Mammary epithelial cell (primary cell): ENCODE measurements at regions of chr22 and their contacts with region 1.

Region 1: DNA sequence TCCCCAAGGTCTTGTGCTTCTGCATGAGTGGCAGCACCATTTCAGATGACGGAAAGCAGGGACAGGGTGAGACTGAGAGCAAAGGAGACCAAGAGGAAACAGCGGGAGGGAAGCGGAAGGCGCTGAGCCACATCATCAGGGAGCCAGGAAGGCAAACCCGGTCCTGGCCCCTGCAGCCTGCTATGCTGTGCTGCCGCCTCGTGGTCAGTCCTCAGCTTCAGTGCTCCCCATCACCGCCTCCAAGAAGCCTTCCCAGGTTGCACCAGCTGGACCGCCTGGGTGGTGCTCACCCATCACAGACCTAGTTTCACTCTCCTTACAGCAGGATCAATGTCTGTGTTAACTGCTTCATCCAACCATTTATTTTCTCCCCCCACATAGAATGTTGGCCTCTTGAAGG is 73.0 kb upstream of the PHF21B start:
- DNase-seq: no peak
- H3K4me3 ChIP-seq: no peak overlapping the region
- H3K27ac ChIP-seq: no peak overlapping the region
- H3K4me1 ChIP-seq: peaks cover 4% of the 10 kb centered on the region
- H3K27me3 ChIP-seq: peaks cover 3% of the 10 kb centered on the region
- CTCF ChIP-seq: peak; percentile 18 to 28

Region 2: DNA sequence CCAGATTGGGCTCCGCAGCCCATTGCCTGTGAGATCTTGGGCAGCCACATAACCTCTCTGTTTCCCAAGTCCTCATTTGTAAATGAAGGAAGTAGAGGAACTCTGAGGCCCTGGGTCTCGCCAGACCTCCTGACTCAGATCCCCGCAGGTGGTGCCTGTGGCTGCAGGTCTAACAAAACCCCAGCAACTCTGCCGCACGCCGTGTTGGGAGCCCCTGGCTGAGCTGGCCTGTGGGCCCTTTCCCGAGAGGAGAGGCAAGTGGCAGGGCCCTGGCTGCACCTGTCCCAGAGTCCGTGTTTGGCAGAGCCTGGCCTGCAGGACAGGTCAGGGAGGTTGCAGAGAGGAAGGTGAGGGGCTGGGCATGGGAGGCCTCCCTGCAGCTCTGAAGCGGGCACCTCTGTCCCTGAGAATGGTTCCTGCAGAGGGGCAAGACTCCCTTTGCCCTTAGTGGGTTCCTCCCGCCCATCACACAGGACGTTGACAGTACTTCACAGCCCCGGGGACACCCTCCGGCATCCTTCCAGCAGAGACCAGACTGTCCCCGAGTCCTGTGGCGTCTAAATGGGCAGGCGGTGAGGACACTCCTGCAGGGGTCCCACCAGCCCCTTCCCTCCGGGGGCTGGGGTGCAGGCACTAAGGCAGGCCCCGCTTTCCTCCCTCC is 262.7 kb before region 1 on chr22:
- CTCF ChIA-PET with region 1: interaction called, 5 read pairs
- dilution Hi-C with region 1: no loop called
- in situ Hi-C with region 1: loop called in 1 of 2 experiments (anchors 25 kb)
- intact Hi-C with region 1: loop called (anchors 2 kb)
- DNase-seq: no peak
- H3K4me3 ChIP-seq: no peak overlapping the region
- H3K27ac ChIP-seq: no peak overlapping the region
- H3K4me1 ChIP-seq: no peaks in the 10 kb centered on the region
- H3K27me3 ChIP-seq: no peaks in the 10 kb centered on the region
- CTCF ChIP-seq: no peak

Region 3: GRCh38 chr22:44870021-44870420 is 212.8 kb before region 1 on chr22:
- CTCF ChIA-PET with region 1: no interaction called
- dilution Hi-C with region 1: no loop called
- in situ Hi-C with region 1: no loop called
- intact Hi-C with region 1: no loop called
- DNase-seq: peak; percentile 72
- H3K4me3 ChIP-seq: no peak overlapping the region
- H3K27ac ChIP-seq: no peak overlapping the region
- H3K4me1 ChIP-seq: peaks cover 10% of the 10 kb centered on the region
- H3K27me3 ChIP-seq: no peaks in the 10 kb centered on the region
- CTCF ChIP-seq: no peak

Region 4: DNA sequence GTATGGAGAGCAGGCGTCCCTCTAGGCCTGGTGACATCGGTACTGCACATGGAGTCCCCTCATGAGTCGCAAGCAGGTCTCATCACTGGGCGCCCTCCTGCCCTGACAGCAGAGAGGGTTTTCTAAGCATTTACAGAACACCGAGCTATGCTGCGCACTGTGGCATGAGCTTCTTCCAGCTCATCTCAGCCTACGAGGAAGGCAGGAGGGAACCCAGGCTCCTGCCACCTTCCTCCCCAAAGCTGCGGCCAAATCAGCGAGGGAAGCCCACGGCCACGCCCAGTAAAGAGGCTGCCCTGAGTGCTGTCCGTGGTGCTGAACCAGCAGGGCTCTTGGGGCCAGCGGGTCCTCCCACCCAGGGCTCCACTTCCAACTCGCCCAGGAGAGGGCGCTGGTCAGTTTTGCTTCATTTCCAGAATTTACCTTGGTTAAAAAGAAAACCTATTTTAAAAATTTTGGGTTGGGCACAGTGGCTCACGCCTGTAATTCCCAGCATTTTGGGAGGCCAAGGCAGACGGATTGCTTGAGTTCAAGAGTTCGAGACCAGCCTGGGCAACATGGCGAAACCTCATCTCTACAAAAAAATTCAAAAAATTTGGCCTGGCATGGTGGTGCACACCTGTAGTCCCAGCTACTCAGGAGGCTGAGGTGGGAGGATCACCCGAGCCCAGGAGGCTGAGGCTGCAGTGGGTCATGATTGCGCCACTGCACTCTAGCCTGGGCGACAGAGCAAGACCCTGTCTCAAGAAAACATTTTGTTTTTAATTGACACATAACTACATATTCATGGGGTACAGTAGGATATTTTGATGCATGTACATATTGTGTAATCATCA is 107.2 kb before region 1 on chr22:
- CTCF ChIA-PET with region 1: interaction called, 4 read pairs
- dilution Hi-C with region 1: no loop called
- in situ Hi-C with region 1: loop called in 1 of 2 experiments (anchors 10 kb)
- intact Hi-C with region 1: loop called (anchors 1 kb)
- DNase-seq: peak; percentile 68
- H3K4me3 ChIP-seq: no peak overlapping the region
- H3K27ac ChIP-seq: no peak overlapping the region
- H3K4me1 ChIP-seq: no peaks in the 10 kb centered on the region
- H3K27me3 ChIP-seq: peaks cover 3% of the 10 kb centered on the region
- CTCF ChIP-seq: peak; percentile 62 to 85

Region 5: GRCh38 chr22:44988671-44989070 is 94.1 kb before region 1 on chr22:
- CTCF ChIA-PET with region 1: no interaction called
- dilution Hi-C with region 1: no loop called
- in situ Hi-C with region 1: loop called in 1 of 2 experiments (anchors 10 kb)
- intact Hi-C with region 1: no loop called
- DNase-seq: no peak
- H3K4me3 ChIP-seq: no peak overlapping the region
- H3K27ac ChIP-seq: no peak overlapping the region
- H3K4me1 ChIP-seq: no peaks in the 10 kb centered on the region
- H3K27me3 ChIP-seq: peaks cover 1% of the 10 kb centered on the region
- CTCF ChIP-seq: peak; percentile 8 to 33

Region 6: DNA sequence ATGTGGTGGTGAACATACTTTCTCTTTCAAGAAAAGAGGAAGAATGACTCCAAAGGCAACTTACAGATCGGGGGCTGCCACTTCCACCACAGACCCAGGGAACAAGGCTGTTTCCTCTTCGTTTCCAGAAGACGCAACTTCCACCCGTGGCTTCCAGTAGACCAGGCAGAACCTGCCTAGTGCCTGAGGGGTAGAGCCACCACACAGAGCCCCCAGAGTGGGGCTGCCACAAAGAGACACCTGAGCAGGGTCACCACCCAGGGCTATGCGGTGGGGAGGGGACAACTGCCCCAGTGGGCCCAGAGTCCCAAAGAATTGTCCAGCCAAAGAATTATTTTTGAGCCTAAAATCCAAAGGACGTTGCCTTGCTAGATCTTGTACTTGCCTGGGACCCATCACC is 56.3 kb before region 1 on chr22:
- CTCF ChIA-PET with region 1: no interaction called
- dilution Hi-C with region 1: loop called (anchors 5 kb)
- in situ Hi-C with region 1: no loop called
- intact Hi-C with region 1: no loop called
- DNase-seq: no peak
- H3K4me3 ChIP-seq: no peak overlapping the region
- H3K27ac ChIP-seq: no peak overlapping the region
- H3K4me1 ChIP-seq: no peaks in the 10 kb centered on the region
- H3K27me3 ChIP-seq: peaks cover 2% of the 10 kb centered on the region
- CTCF ChIP-seq: no peak

Region 7: DNA sequence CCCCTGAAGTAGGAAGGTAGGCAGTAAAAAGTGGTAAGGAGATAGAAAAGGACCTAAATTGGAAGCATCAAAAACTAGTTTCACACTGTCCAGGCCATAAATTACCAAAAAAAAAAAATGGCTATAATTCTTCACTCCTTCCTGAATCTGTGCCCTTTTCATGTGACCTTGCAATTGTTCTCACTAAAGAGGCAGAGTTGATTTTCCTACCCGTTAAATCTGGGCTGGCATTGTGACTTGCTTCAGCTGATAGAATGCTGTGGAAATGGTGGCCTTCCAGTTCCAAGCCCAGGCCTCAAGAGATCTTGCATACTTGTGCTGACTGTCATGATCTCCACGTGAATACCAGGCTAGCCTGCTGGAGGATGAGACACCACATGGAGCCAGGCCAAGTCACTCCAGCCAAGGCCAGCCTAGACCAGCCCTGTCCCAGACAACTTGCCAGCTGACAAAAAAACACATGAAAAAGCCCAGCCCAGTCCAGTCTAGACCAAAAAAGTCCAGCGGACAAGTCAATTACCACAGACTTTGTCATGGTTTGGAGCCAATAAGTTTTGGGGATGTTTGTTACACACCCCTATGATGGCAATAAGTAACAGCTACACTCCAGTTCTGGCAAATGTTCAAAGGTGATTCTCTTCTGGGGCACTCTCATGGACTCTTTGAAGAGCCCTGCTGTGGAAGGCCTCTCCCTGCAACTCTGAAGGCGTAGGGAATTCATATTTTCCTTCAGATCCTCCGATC is 29.5 kb after region 1 on chr22:
- CTCF ChIA-PET with region 1: no interaction called
- dilution Hi-C with region 1: no loop called
- in situ Hi-C with region 1: no loop called
- intact Hi-C with region 1: no loop called
- DNase-seq: peak; percentile 84
- H3K4me3 ChIP-seq: no peak overlapping the region
- H3K27ac ChIP-seq: no peak overlapping the region
- H3K4me1 ChIP-seq: peaks cover 6% of the 10 kb centered on the region
- H3K27me3 ChIP-seq: no peaks in the 10 kb centered on the region
- CTCF ChIP-seq: no peak

Region 8: GRCh38 chr22:45131749-45132148 is 49.0 kb after region 1 on chr22:
- CTCF ChIA-PET with region 1: no interaction called
- dilution Hi-C with region 1: loop called (anchors 5 kb)
- in situ Hi-C with region 1: no loop called
- intact Hi-C with region 1: no loop called
- DNase-seq: no peak
- H3K4me3 ChIP-seq: no peak overlapping the region
- H3K27ac ChIP-seq: no peak overlapping the region
- H3K4me1 ChIP-seq: peaks cover 8% of the 10 kb centered on the region
- H3K27me3 ChIP-seq: no peaks in the 10 kb centered on the region
- CTCF ChIP-seq: no peak

Region 9: DNA sequence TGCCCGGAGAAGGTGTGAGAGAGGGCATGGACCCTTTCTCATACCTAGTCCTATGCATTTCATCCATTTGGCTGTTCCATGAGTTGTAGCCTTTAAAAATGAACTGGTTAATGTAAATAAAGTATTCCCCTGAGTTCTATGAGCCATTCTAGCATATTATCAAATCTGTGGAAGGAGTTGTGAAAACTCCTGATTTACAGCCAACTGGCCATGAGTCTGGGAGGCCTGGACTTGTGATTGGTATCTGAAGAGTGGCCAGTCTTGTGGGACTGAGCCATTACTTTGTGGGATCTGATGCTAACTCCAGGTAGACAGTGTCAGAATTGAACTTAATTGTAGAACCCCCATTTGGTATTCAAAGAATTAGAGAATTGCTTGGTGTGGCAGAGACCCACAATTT is 275.3 kb after region 1 on chr22:
- CTCF ChIA-PET with region 1: no interaction called
- dilution Hi-C with region 1: no loop called
- in situ Hi-C with region 1: no loop called
- intact Hi-C with region 1: no loop called
- DNase-seq: no peak
- H3K4me3 ChIP-seq: no peak overlapping the region
- H3K27ac ChIP-seq: no peak overlapping the region
- H3K4me1 ChIP-seq: no peaks in the 10 kb centered on the region
- H3K27me3 ChIP-seq: no peaks in the 10 kb centered on the region
- CTCF ChIP-seq: no peak